Posterior cingulate gyrus (tissue), 11 donors: ENCODE measurements at regions of chrX and their contacts with region 1.

Region 1: GRCh38 chrX:13473442-13474163 is 95.8 kb upstream of the EGFL6 start:
- DNase-seq: peak in 2 of 10 donors; percentile 13 to 16

Region 2: GRCh38 chrX:13360146-13360545 is 113.5 kb before region 1 on chrX:
- intact Hi-C with region 1: loop called (anchors 10 kb)
- DNase-seq: no peak

Region 3: GRCh38 chrX:13535376-13536165 is 62.0 kb after region 1 on chrX:
- intact Hi-C with region 1: no loop called
- DNase-seq: no peak